Heart right ventricle (tissue), 16 donors: ENCODE measurements at regions of chr6 and their contacts with region 1.

Region 1: GRCh38 chr6:53529324-53530036 is 15.4 kb downstream of the GCLC start:
- DNase-seq: no peak
- ATAC-seq: peak in 6 of 8 donors; percentile 31 to 62 (median 46)
- H3K4me3 ChIP-seq: no peak overlapping the region
- H3K27ac ChIP-seq: peak overlapping the region in 7 of 10 donors; percentile 14 to 87 (median 79)
- H3K4me1 ChIP-seq: peaks cover 0 to 86% (median 64%) of the 10 kb centered on the region in 9 donors
- H3K27me3 ChIP-seq: no peaks in the 10 kb centered on the region
- CTCF ChIP-seq: no peak

Region 2: GRCh38 chr6:53476964-53477363 is 52.5 kb before region 1 on chr6:
- intact Hi-C with region 1: no loop called
- DNase-seq: no peak
- ATAC-seq: no peak
- H3K4me3 ChIP-seq: no peak overlapping the region
- H3K27ac ChIP-seq: no peak overlapping the region
- H3K4me1 ChIP-seq: peaks cover 0 to 8% (median 0%) of the 10 kb centered on the region in 9 donors
- H3K27me3 ChIP-seq: no peaks in the 10 kb centered on the region
- CTCF ChIP-seq: no peak

Region 3: DNA sequence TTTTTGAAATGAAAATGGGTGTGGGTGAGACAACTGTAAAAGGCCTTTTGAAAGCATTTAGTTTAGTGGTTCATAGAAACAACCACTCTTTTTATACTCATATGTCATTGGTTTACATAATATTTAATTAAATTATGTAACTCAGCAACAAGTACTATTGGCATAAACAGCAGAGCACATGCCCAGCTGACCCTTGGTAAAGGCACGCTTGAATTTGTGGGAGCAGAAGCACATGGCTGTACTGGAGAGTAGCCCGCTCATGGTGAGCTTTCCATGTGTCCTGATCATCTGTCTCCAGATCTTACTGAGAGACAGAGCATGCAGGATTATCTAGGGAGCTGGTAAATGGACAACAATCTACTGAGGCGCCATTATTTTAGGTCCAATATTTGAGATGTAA is 153.2 kb after region 1 on chr6:
- intact Hi-C with region 1: loop called in 1 of 10 experiments (anchors 5 kb)
- DNase-seq: no peak
- ATAC-seq: no peak
- H3K4me3 ChIP-seq: no peak overlapping the region
- H3K27ac ChIP-seq: no peak overlapping the region
- H3K4me1 ChIP-seq: peaks cover 0 to 19% (median 11%) of the 10 kb centered on the region in 9 donors
- H3K27me3 ChIP-seq: no peaks in the 10 kb centered on the region
- CTCF ChIP-seq: no peak

Region 4: DNA sequence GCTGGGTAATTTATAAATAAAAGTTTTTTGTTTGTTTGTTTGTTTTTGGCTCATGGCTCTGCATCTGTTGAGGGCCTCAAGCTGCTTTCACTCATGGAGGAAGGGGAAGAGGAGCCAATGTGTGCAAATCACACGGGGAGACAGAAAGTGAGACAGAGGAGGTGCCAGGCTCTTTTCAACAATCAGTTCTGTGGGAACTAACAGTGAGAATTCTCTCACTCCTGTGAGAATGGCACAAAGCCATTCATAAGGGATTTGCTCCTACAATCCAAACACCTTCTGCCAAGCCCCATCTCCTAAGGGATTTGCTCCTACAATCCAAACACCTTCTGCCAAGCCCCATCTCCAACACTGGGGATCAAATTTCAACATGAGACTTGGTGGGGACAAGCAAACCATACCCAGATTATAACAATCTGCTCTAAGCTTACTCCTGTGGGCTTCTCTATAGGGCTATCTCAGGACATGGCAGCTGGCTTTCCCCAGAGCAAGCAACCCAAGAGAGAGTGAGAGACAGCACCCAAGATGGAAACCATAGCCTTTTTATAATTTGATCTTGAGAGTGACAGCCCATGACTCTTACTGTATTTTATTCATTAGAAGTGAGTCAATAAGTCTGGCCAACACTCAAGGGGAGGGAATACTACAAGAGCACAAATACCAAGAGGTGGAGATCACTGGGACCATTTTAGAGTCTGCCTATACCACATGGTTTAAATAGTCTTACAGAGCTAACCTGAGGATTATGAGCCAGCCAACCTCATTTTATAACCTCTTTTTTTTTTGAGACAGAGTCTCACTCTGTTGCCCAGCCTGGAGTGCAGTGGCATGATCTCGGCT is 242.5 kb after region 1 on chr6:
- intact Hi-C with region 1: no loop called
- DNase-seq: no peak
- ATAC-seq: peak in 4 of 8 donors; percentile 18 to 61 (median 48)
- H3K4me3 ChIP-seq: no peak overlapping the region
- H3K27ac ChIP-seq: no peak overlapping the region
- H3K4me1 ChIP-seq: peaks cover 0 to 22% (median 6%) of the 10 kb centered on the region in 9 donors
- H3K27me3 ChIP-seq: no peaks in the 10 kb centered on the region
- CTCF ChIP-seq: no peak